Panc1 (cell line): ENCODE measurements at regions of chr16 and their contacts with region 1.

Region 1: GRCh38 chr16:22386976-22387375 is 12.6 kb upstream of the CDR2 start:
- DNase-seq: no peak
- ATAC-seq: peak; percentile 80
- H3K4me3 ChIP-seq: no peak overlapping the region
- H3K27ac ChIP-seq: peak overlapping the region; percentile 25; the same call in 1 of the 2 replicates
- H3K4me1 ChIP-seq: peaks cover 10% of the 10 kb centered on the region; the same call in 1 of the 2 replicates
- H3K27me3 ChIP-seq: no peaks in the 10 kb centered on the region
- CTCF ChIP-seq: no peak

Region 2: GRCh38 chr16:22297114-22297878 is 89.7 kb before region 1 on chr16 and contains the start of gene POLR3E:
- CTCF ChIA-PET with region 1: no interaction called
- POLR2A ChIA-PET with region 1: interaction called, 11 read pairs
- in situ Hi-C with region 1: no loop called
- intact Hi-C with region 1: no loop called
- DNase-seq: peak; percentile 94
- ATAC-seq: peak; percentile 90
- H3K4me3 ChIP-seq: peak within 1 kb of the TSS; percentile 87 to 92
- H3K27ac ChIP-seq: peak within 1 kb of the TSS; percentile 76
- H3K4me1 ChIP-seq: peaks cover 3% of the 10 kb centered on the region; the same call in 1 of the 2 replicates
- H3K27me3 ChIP-seq: no peaks in the 10 kb centered on the region
- CTCF ChIP-seq: peak; percentile 94
- total RNA-seq, gene POLR3E: 45.2 TPM

Region 3: DNA sequence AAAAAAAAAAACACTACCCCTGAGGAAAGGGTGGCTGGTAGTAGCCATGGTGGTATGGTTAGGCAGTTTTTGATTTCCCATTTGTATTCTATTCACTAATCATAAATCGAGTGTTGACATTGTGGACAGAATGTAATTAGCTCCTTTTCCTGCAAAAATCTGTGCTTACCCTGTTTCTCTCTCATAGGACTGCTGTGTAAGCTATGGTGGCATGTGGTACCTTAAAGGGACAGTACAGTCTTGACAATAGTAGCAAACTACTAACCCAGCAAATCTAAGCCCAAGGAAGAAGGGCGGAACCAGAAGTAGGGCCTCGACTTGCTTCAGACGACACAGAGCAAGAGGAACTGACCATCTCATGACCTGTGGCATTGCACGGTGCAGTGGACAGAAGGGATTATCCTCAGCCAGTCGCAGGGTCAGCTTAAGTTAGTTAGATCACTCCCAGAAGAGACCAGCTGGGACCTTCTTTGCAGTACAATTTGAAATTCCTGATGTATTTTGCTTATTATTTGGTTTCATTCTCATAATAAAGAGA is 53.5 kb before region 1 on chr16:
- CTCF ChIA-PET with region 1: no interaction called
- POLR2A ChIA-PET with region 1: interaction called, 12 read pairs
- in situ Hi-C with region 1: no loop called
- intact Hi-C with region 1: no loop called
- DNase-seq: no peak
- ATAC-seq: no peak
- H3K4me3 ChIP-seq: no peak overlapping the region
- H3K27ac ChIP-seq: no peak overlapping the region
- H3K4me1 ChIP-seq: no peaks in the 10 kb centered on the region
- H3K27me3 ChIP-seq: no peaks in the 10 kb centered on the region
- CTCF ChIP-seq: no peak

Region 4: GRCh38 chr16:22397464-22397863 is 10.5 kb after region 1 on chr16:
- CTCF ChIA-PET with region 1: no interaction called
- POLR2A ChIA-PET with region 1: interaction called, 13 read pairs
- in situ Hi-C with region 1: no loop called
- intact Hi-C with region 1: no loop called
- DNase-seq: no peak
- ATAC-seq: no peak
- H3K4me3 ChIP-seq: no peak overlapping the region
- H3K27ac ChIP-seq: no peak overlapping the region
- H3K4me1 ChIP-seq: no peaks in the 10 kb centered on the region
- H3K27me3 ChIP-seq: no peaks in the 10 kb centered on the region
- CTCF ChIP-seq: no peak